ENCODE measurements at regions of chr1 and their contacts with region 1.

Region 1: DNA sequence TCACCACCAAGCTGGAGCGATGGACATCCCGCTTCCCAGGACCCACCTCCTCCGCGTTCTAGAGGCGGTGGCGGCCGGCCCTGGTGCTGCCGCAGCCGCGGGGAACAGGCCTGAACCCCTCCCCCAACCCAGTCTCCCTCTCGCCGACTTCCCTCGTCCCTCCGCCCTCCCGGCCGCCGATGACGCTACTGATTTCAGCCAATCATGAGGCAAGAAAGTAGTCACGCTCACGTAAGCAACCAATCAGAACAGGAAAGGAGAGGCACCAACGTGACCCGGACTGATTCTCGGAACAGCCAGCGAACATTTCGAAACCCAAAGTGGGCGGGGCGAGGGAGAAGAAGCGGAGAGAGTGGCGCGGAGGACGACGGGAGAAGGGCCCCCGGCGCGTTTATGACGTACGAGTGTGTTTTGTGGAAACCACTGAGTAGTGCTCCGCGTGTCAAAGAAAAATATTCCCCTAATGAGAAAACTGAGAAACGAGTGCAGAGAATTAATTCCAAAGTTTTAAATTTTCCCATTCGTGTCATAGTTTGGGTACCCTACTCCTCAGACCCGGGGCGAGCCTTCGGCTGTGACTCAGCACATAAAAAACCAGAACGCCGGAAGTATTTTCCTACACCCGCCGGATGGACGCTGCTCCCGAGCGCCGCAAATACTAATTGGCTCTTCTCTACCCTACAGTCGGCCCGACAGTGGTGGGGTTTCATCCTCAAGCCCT is at the start of gene NRDC:
- DNase-seq: peak; percentile 100
- ATAC-seq: peak; percentile 86
- H3K4me3 ChIP-seq: peak within 1 kb of the TSS; percentile 87
- H3K27ac ChIP-seq: peak within 1 kb of the TSS; percentile 88
- H3K4me1 ChIP-seq: peaks cover 24% of the 10 kb centered on the region
- H3K27me3 ChIP-seq: no peaks in the 10 kb centered on the region
- CTCF ChIP-seq: no peak
- total RNA-seq, gene NRDC: 96.8 and 116 TPM in 2 replicates

Region 2: DNA sequence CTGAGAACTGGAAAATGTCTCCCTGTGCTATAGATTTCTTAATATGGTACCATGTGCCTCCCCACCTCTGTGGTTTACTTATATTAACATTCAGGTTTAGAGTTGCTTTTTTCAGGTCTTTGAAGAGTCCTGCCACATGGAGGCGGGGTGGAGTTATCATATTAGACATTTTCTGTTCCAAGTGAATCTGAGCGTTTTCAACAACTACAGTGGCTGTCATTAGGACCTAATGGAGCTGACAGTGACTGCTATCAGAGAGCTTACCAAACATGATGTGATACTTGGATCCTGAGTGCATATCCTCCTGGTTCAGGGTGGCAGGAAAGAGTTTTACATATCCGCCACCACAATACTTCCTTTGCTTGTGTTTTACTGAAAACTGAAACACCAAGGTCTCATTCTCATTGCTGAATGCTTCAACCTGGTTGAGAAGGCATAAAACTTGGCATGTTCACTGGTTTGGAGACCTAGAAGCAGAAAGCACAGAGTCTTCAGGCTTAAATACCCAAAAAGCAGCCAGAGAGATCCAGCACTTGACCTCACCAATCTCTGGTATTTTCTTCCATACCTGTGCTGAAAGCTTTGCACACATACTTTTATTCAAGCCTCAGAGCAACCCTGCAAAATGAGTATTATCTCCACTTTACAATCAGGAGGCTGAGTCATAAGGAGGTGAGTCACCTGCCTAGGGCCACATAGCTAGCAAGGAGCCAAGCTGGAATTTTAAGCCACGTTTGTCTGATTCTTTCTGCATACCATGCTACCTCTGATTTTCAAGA is 309.3 kb before region 1 on chr1:
- CTCF ChIA-PET with region 1: no interaction called
- POLR2A ChIA-PET with region 1: interaction called, 5 read pairs
- intact Hi-C with region 1: loop called (anchors 5 kb)
- DNase-seq: peak; percentile 98
- ATAC-seq: peak; percentile 69
- H3K4me3 ChIP-seq: peak overlapping the region; percentile 37
- H3K27ac ChIP-seq: peak overlapping the region; percentile 97
- H3K4me1 ChIP-seq: peaks cover 58% of the 10 kb centered on the region
- H3K27me3 ChIP-seq: no peaks in the 10 kb centered on the region
- CTCF ChIP-seq: peak; percentile 63

Region 3: GRCh38 chr1:51960262-51960661 is 81.5 kb after region 1 on chr1:
- CTCF ChIA-PET with region 1: no interaction called
- POLR2A ChIA-PET with region 1: no interaction called
- intact Hi-C with region 1: no loop called
- DNase-seq: no peak
- ATAC-seq: no peak
- H3K4me3 ChIP-seq: no peak overlapping the region
- H3K27ac ChIP-seq: no peak overlapping the region
- H3K4me1 ChIP-seq: no peaks in the 10 kb centered on the region; the same call in 1 of the 2 replicates
- H3K27me3 ChIP-seq: no peaks in the 10 kb centered on the region
- CTCF ChIP-seq: no peak

Measured in PC-3 (cell line).